ENCODE measurements at regions of chr12 and their contacts with region 1.

Region 1: DNA sequence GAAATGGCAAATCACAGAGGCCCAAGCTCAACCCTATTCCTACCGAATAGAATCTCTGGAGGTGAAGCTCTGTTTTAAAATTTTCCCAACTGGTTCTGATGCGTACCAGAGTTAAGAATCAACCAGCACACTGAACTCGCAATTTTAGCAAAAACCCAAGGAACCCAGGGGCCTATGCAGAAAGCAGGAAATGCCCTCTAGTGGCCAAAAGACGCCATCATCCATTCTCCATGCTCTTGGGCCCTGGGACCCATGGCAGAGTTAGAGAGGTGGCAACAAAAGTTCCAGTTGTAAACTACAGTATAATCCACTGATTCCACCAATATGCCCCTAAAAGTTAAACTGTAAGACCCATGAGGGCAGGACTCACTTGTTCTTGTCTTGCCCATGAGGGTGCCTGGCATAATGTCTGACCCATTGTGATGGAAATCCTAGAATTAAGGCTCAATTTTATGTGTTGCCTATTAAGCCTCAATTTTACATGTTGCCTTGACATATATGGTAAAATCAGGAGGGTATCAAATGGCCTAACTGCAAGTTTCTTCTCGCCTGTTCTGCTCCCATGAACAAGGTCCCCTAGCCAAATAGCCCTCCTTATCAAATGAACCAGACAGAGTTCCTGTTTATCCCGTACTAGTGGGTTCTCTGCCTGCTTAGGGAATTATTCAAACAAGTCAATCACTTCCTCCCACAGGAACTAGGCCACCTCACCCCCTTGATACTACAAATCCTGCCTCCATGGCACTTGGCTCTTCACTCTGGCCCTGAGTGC is 137.5 kb upstream of the CPM start:
- DNase-seq: peak in 2 of 3 donors; percentile 34 to 78
- ATAC-seq: peak; percentile 59 to 80 (median 78)
- H3K4me3 ChIP-seq: no peak overlapping the region
- H3K27ac ChIP-seq: peak overlapping the region; percentile 6 to 28 (median 18)
- H3K4me1 ChIP-seq: peaks cover 0 to 45% (median 0%) of the 10 kb centered on the region in 4 donors
- H3K27me3 ChIP-seq: no peaks in the 10 kb centered on the region
- CTCF ChIP-seq: peak; percentile 87 to 93 (median 91)
- POLR2A ChIP-seq: no peak

Region 2: GRCh38 chr12:68889647-68890121 is 180.8 kb before region 1 on chr12:
- intact Hi-C with region 1: loop called in 1 of 2 experiments (anchors 5 kb)
- DNase-seq: no peak
- ATAC-seq: no peak
- H3K4me3 ChIP-seq: no peak overlapping the region
- H3K27ac ChIP-seq: no peak overlapping the region
- H3K4me1 ChIP-seq: peaks cover 0 to 4% (median 0%) of the 10 kb centered on the region in 4 donors
- H3K27me3 ChIP-seq: no peaks in the 10 kb centered on the region
- CTCF ChIP-seq: no peak
- POLR2A ChIP-seq: no peak

Measured in right lobe of liver (tissue), 6 donors.